SK-N-SH (cell line): ENCODE measurements at regions of chr22 and their contacts with region 1.

Region 1: DNA sequence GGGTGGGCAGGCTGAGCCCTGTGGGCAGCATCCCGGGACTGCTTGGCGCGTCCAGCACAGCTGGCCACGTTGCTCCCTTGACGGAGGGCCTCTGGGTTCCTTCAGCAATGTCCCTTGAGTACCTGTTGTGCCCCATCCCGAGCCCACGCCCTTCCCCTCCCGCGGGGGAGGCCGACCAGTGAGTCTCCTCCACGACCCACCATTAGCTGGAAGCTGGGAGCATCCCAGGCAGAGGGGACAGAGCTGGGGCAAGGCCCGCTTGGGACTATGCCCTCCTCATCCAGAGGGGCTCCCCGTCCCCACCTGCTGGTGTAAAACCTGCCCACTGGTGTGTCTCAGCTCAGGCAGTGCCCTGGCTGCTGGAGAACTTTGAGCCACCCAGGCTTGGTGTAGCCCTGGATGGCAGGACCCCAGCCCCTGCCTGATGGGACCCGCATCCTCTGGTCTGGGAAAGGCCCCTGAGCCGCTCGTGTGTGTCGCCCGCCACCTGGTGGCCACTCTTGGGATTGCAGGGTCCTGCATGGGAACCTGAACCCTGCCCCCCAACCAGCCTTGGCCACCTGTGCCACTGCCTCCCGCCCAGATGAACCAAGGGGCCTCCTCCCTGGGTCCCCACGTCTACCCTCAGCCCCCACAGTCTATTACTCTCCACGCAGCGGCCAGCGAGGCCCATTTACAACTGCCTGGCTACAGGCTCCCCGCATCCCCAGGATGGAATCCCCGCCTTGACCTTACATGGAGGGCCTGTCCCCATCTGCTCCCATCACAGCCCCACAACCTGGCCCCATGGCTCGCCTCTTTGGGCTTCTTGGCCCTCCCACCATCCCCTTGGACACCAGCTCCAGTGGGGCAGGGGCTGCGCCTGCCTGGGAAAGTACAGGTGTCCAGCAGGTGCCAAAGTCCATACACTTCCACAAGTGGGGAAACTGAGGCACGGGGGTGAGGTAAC is 16.6 kb upstream of the ARHGAP8 start:
- DNase-seq: peak; percentile 94
- H3K4me3 ChIP-seq: no peak overlapping the region; a peak in 1 of 4 replicates
- H3K27ac ChIP-seq: no peak overlapping the region
- H3K4me1 ChIP-seq: no peaks in the 10 kb centered on the region; a peak in 1 of 4 replicates
- H3K27me3 ChIP-seq: no peaks in the 10 kb centered on the region
- CTCF ChIP-seq: peak; percentile 87
- EP300 ChIP-seq: no peak
- RAD21 ChIP-seq: peak; percentile 92

Region 2: DNA sequence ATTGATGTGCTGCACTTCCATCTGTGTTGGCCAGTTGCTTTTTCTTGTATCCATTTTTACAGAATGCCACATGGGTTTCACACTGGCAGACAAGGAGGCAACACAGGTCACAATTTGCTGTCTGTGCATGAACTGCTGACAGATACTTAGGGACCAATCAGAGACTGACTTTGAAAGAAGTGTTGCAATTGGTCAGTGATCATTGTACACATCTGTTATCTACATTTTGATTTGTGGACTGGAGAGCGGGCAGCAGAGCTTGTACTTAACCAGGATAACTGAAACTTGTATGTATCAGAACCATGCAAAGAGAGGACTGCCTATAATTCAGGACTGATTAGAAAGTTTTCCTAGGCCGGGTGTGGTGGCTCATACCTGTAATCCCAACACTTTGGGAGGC is 12.0 kb before region 1 on chr22:
- CTCF ChIA-PET with region 1: interaction called, 68 read pairs
- POLR2A ChIA-PET with region 1: no interaction called
- DNase-seq: peak; percentile 61
- H3K4me3 ChIP-seq: no peak overlapping the region
- H3K27ac ChIP-seq: no peak overlapping the region
- H3K4me1 ChIP-seq: peaks cover 0 to 10% of the 10 kb centered on the region in 2 experiments; a peak in 1 of 4 replicates
- H3K27me3 ChIP-seq: no peaks in the 10 kb centered on the region
- CTCF ChIP-seq: no peak
- EP300 ChIP-seq: no peak
- RAD21 ChIP-seq: no peak

Region 3: DNA sequence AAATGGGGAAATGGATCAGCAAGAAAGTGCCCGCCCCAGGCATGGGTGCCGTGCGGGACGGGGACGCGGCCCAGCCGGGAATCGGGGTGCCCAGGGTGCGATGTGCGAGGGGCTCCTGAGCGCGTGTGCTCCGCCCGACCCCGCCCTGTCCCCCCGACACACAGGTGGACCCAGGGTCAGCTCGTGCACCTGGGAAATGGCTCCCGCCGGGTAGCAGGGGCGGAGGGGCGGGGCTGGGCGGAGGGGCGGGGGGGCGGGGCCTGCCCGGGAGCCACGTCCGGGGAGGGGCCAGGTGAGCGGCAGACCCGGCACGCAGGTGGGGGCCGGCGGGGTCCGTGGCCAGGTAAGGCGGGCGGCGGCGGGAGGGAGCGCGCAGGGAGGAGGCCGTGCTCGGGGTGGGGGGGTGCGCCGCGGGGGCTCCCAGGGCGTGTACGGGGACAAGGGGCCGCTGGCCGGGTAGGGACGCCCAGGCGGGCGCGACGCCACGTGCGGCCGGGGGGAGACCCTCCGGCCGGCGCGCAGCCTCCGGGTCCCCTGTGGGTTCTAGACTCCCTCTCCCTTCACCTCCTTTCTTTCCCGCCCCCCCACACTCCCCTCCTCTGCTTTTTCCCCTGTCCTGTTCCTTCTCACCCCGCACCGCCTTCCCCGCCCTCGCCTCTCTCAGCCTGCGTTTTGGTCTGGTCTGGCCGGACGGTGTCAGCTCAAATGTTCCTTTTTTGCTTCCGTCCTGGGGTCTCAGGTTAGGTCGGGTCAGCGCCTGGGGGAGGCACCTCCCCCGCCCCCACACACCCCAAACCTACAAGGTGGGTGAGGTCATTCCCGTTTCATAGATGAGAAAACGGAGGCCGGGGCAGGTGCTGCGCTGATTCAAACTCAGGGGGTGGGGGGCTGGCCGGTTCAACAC is 16.7 kb after region 1 on chr22 and contains the start of gene ARHGAP8:
- CTCF ChIA-PET with region 1: interaction called, 11 read pairs
- POLR2A ChIA-PET with region 1: no interaction called
- DNase-seq: peak; percentile 74
- H3K4me3 ChIP-seq: peak within 1 kb of the TSS in 1 of 2 experiments; percentile 2; a peak in 1 of 4 replicates
- H3K27ac ChIP-seq: no peak within 1 kb of the TSS
- H3K4me1 ChIP-seq: peaks cover 0 to 2% of the 10 kb centered on the region in 2 experiments; a peak in 1 of 4 replicates
- H3K27me3 ChIP-seq: no peaks in the 10 kb centered on the region
- CTCF ChIP-seq: no peak
- EP300 ChIP-seq: no peak
- RAD21 ChIP-seq: no peak
- polyA plus RNA-seq, gene ARHGAP8: 0.05 and 0.08 TPM in 2 replicates